ENCODE measurements at regions of chr2 and their contacts with region 1.

Region 1: DNA sequence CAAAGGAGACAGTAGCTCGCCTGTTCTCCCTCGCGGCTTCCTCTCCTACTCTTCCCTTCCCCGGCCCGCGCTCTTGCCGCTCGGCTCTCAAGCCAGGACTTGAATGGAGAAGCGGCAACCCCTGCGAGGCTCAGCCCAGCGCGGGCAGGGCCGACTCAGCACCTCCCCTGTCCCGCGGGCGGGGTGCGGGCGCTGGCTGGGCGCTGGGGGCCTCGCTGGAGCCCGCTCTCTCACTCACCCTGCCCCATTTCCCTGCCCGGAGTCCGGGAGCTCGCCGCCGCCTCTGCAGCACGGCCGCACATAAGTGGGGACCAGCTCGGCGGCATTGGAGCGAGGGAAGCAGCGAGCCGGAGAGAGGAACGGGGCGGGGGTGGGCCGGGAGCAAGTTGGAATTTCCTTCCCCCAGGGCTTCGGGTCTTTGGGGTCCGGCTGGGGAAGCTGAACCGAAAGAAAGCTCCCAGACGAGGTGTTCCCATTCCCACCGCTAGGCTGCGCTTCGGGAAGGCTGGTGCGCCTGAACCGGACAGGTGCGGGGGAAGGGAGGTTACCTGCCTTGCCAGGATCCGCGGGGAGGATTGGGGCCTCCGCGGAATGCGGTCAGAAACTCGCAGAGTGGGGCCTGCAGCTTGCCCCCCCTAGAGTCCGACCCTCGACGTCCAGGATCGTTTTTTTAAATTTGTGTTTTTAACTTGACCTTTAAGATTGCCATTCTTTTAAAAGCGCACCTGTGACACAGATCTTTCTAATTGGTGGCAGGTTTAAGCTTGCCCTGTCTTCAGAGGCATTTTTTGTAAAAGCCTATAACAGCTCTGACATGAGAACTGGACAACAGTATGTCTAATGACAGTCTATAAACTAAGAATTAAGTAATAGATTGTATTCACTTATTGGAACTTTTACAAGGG is at the start of gene COBLL1:
- DNase-seq: peak; percentile 80
- H3K4me3 ChIP-seq: peak within 1 kb of the TSS; percentile 80
- H3K27ac ChIP-seq: peak within 1 kb of the TSS; percentile 82
- H3K4me1 ChIP-seq: peaks cover 31% of the 10 kb centered on the region
- H3K27me3 ChIP-seq: no peaks in the 10 kb centered on the region
- CTCF ChIP-seq: peak; percentile 79
- total RNA-seq, gene COBLL1: 4.2 and 6.6 TPM in 2 replicates

Region 2: GRCh38 chr2:164896634-164897355 is 54.8 kb after region 1 on chr2:
- CTCF ChIA-PET with region 1: no interaction called
- POLR2A ChIA-PET with region 1: no interaction called
- intact Hi-C with region 1: loop called (anchors 5 kb)
- DNase-seq: peak; percentile 64
- H3K4me3 ChIP-seq: no peak overlapping the region
- H3K27ac ChIP-seq: no peak overlapping the region
- H3K4me1 ChIP-seq: peaks cover 24% of the 10 kb centered on the region
- H3K27me3 ChIP-seq: no peaks in the 10 kb centered on the region
- CTCF ChIP-seq: no peak

Region 3: DNA sequence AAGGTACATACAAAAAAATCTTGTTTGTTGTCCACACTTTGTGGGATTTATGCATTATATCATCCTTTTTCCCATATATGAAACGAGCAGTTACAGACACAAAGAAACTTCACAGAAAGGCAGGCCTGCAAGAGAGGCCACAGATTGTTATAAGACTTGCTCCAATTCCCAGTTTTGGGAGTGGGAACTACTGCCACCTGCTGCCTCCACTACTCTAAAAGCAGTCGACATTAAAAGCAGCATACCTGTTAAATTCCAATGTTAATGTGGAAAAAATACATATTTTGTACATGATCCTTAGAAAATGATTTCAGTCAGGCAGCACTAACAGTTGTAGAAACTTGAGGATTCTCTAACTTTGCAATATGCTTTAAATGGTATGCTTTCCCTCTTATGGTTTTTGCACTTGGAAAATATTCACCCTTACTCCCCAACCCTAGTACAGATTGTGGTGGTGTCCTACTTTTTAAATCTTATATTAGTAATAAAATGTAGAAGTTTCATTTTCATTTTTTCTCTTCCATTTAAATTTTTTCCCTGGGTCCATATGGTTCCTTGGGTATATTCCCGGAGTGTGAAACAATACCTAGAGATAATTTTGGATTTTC is 75.4 kb after region 1 on chr2:
- CTCF ChIA-PET with region 1: interaction called, 4 read pairs
- POLR2A ChIA-PET with region 1: no interaction called
- intact Hi-C with region 1: loop called (anchors 5 kb)
- DNase-seq: peak; percentile 39
- H3K4me3 ChIP-seq: no peak overlapping the region
- H3K27ac ChIP-seq: no peak overlapping the region
- H3K4me1 ChIP-seq: no peaks in the 10 kb centered on the region
- H3K27me3 ChIP-seq: no peaks in the 10 kb centered on the region
- CTCF ChIP-seq: peak; percentile 60